ENCODE measurements at regions of chr13 and their contacts with region 1.

Region 1: DNA sequence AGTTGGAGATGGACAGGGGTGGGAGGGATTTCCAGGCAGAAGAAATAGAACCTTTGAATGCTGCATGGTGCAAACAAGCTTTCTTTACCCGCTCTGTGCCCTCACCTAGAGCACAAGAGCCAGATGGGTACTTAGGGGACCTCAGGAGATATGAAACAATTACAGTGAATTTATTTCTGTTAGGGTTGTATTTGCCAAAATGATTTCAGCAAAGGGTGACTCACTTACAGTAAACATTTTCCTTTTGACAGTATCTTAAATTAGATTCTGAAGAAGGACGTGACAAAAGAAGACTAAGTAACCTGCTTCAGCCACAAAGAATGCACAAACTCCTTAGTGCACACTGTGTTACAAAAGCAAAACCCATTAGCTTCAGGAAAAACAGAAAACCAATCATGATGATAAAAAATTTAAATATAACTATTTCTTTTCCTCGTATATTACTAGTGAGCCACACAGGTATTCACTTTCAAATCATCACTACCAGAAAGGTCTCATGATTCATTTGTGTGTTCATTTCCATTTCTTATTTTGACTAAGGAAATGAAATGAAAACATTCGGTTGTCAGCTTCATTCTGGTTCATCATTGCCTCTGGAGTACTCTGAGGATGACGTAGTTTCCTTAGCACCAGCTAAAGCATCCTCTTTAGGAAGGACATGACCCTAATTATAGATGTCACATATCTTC is 158.8 kb downstream of the NHLRC3 start:
- DNase-seq: no peak
- ATAC-seq: peak in 7 of 8 donors; percentile 29 to 71 (median 61)
- H3K4me3 ChIP-seq: no peak overlapping the region
- H3K27ac ChIP-seq: peak overlapping the region in 8 of 10 donors; percentile 11 to 52 (median 42)
- H3K4me1 ChIP-seq: peaks cover 0 to 28% (median 12%) of the 10 kb centered on the region in 9 donors
- H3K27me3 ChIP-seq: no peaks in the 10 kb centered on the region
- CTCF ChIP-seq: no peak

Region 2: DNA sequence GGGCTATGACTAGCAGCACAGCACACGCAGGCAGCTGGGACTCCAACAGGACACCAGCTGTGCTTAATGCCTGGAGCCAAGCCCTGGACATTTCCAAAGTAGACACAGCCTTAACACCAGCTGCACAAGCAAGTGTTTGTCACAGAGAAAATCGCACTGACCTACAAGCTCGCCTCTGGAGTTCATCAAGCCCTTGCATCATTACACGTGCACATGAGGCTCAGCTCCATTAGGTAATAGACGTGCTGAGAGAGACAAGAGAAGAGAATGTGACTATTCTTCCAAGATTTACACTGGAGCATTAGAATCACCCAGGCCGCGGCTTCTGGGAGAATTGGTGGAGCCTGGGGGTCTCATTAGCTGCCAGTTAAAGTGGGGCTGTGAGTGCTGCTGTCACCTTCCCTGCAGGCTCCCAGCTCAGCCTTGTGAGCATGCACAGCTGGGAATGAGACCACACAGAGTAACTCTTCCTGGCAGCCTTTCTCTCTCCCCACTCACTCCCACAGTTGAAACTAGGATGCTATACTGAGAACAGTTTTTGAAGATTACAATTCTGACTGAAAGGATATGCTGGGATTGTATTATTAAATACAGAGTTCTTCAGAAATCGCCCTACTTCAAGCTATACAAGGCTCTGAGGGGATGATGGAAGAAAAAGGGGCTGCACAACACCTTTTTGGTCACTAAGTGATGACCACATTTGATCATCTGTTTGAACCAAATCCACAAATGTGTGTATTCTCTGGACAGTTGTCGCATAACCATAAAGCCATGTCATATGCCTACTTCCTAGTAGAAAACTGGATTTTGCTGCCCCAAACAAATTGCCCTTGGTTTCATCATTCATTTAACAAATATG is 217.0 kb before region 1 on chr13:
- intact Hi-C with region 1: no loop called
- DNase-seq: peak; percentile 22 to 61
- ATAC-seq: peak; percentile 80 to 97 (median 95)
- H3K4me3 ChIP-seq: no peak overlapping the region
- H3K27ac ChIP-seq: no peak overlapping the region
- H3K4me1 ChIP-seq: peaks cover 0 to 6% (median 0%) of the 10 kb centered on the region in 9 donors
- H3K27me3 ChIP-seq: peaks cover 0 to 16% (median 0%) of the 10 kb centered on the region in 7 donors
- CTCF ChIP-seq: no peak

Region 3: DNA sequence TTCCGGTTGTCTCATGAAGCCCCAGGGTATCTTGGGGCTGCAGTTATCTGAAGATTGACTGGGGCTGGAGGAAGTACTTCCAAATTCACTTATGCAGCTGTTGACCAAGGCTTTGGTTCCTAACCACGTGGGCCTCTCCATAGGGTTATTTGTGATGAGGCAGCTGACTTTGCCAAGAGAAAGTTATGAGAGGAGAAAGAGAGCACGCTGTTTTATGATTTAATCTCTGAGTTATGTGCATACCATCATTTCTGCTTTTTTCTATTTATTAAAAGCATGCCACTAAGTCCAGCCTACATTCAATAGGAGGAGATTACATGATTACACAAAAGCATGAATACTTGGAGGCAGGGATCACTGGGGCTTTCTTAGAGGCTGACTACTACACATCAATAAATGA is 56.7 kb after region 1 on chr13:
- intact Hi-C with region 1: loop called in 1 of 10 experiments (anchors 2 kb)
- DNase-seq: no peak
- ATAC-seq: no peak
- H3K4me3 ChIP-seq: no peak overlapping the region
- H3K27ac ChIP-seq: peak overlapping the region in 3 of 10 donors; percentile 36 to 87 (median 39)
- H3K4me1 ChIP-seq: peaks cover 5 to 63% (median 37%) of the 10 kb centered on the region in 9 donors
- H3K27me3 ChIP-seq: no peaks in the 10 kb centered on the region
- CTCF ChIP-seq: no peak